ENCODE measurements at regions of chr2 and their contacts with region 1.

Region 1: GRCh38 chr2:64749446-64749845 is 95.7 kb upstream of the SERTAD2 start:
- DNase-seq: no peak
- ATAC-seq: no peak

Region 2: GRCh38 chr2:64582774-64583340 is 166.6 kb before region 1 on chr2:
- intact Hi-C with region 1: no loop called
- DNase-seq: no peak
- ATAC-seq: no peak

Region 3: GRCh38 chr2:64653349-64654062 is 95.9 kb before region 1 on chr2 and contains the start of gene SERTAD2:
- intact Hi-C with region 1: loop called (anchors 10 kb)
- DNase-seq: peak; percentile 96
- ATAC-seq: peak; percentile 89
- total RNA-seq, gene SERTAD2: 14.6 TPM

Region 4: DNA sequence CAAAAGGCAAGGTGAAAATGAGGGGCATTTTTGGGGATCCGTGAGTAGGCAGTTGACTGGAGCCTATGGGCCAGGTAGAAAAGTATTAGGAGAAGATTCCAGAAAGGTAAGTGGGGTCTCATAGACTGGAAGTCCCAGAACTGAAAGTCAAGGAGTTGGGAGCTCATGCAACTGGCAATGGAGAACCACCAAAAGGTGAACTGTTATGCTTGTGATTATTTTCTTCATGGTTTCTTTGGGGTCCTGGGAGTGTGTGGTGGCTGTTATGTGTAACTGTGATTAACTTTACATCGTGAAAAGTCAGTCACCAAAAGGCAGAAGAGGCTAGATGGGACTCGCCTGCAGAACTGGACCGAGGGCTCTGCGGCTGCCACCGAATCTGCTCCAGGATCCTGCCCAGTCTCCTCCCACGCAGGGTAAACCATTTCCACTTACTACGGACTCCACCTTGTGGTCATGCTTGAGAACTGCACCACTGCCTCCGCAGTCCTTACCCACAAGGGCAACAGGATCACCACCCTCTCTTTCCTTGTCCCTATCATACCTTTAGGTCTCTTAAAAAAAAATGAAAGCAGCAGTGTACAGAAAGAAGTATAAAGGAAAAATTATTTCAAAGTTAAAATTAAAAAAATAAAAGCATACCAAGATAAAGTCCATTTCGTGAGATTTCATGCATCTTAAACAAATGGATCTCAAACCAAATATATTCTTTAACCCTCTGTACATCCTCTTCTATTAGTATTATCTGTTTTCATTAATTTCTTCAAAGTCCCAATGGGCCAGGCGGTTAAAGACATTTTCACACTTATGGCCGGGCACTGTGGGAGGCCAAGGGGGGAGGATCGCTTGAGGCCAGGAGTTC is 291.2 kb after region 1 on chr2:
- intact Hi-C with region 1: no loop called
- DNase-seq: peak; percentile 85
- ATAC-seq: peak; percentile 98